ENCODE measurements at regions of chr10 and their contacts with region 1.

Region 1: GRCh38 chr10:10911471-10911921 is 106.2 kb upstream of the CELF2 start:
- DNase-seq: peak; percentile 83

Region 2: GRCh38 chr10:10798102-10798863 is 113.2 kb before region 1 on chr10:
- intact Hi-C with region 1: loop called (anchors 5 kb)
- DNase-seq: no peak

Region 3: DNA sequence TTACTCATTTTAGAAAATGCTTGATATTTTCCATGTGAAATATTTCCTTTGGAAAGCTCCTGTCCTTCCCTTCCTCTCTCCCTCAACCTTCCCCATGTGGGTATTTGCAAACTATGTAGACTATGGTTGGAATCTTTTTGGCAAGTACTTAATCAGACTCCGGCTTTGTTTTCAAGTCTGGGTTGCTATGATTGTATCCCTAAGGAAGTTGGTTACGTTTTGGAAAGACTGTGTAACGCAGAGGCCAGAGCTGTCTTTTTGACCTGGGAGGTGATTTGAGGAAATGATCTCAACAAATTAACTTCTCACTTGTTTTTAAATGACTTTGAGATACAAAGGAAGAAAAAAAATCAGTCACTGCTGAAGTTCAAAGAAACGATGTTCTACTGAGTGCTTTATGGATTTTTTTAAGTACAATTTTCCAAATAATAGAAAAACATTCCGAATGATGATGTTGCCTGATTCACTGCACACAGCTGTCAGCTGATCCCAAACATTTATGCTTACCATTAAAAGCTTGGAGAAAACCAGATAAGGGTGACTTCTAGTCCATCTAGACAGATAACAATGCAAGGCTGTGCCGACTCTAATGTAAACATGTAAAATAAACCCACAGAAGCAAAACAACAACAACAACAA is 39.3 kb before region 1 on chr10:
- intact Hi-C with region 1: loop called (anchors 5 kb)
- DNase-seq: no peak

Region 4: GRCh38 chr10:11017570-11018431 is 106.3 kb after region 1 on chr10 and contains the start of gene CELF2:
- intact Hi-C with region 1: loop called (anchors 5 kb)
- DNase-seq: peak; percentile 84
- total RNA-seq, gene CELF2: 67.5 TPM